H1 (cell line): ENCODE measurements at regions of chr2 and their contacts with region 1.

Region 1: DNA sequence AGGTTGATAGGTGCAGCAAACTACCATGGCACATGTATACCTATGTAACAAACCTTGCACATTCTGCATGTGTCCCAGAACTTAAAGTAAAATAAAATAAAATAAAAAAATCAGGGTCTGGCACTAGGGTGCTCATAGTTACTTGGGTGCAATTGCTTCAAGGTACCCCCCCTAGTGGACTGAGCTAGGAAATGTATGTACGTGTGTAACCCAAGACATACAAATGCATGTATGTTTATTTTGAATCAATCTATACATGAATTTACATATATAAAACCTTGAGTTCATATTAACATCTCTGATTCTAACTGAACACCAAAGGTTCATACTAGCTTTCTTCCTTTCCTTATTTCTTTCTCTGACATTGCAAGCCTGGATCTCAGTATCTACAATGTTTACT is 51.5 kb downstream of the USP37 start:
- DNase-seq: no peak
- H3K4me3 ChIP-seq: no peak overlapping the region
- H3K27ac ChIP-seq: no peak overlapping the region
- H3K4me1 ChIP-seq: no peaks in the 10 kb centered on the region
- H3K27me3 ChIP-seq: no peaks in the 10 kb centered on the region
- CTCF ChIP-seq: peak in 2 of 3 experiments; percentile 25 to 51; a peak in 2 of 4 replicates
- EP300 ChIP-seq: no peak
- POLR2A ChIP-seq: no peak
- RAD21 ChIP-seq: peak in 1 of 2 experiments; percentile 18; a peak in 1 of 4 replicates

Region 2: GRCh38 chr2:218501665-218502064 is 14.9 kb before region 1 on chr2:
- CTCF ChIA-PET with region 1: interaction called, 16 read pairs
- POLR2A ChIA-PET with region 1: interaction called, 6 read pairs
- DNase-seq: no peak
- H3K4me3 ChIP-seq: no peak overlapping the region
- H3K27ac ChIP-seq: no peak overlapping the region
- H3K4me1 ChIP-seq: no peaks in the 10 kb centered on the region
- H3K27me3 ChIP-seq: no peaks in the 10 kb centered on the region
- CTCF ChIP-seq: no peak
- EP300 ChIP-seq: no peak
- POLR2A ChIP-seq: no peak
- RAD21 ChIP-seq: no peak

Region 3: DNA sequence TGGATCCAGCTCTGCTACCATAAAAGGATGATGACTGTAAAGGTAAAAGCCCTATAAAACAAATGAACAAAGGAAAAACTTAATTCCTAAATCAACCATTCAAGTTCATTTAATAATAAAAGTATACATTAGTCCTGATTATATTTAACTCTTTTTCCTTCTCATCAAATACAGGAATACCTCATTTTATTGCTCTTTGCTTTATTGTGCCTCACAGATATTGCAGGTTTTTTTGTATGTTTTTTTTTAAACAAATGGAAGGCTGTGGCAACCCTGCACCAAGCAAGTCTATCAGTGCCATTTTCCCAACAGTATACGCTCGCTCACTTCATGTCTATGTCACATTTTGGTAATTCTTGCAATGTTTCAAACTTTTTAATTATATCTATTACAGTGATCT is 13.4 kb after region 1 on chr2:
- CTCF ChIA-PET with region 1: interaction called, 18 read pairs
- POLR2A ChIA-PET with region 1: interaction called, 4 read pairs
- DNase-seq: no peak
- H3K4me3 ChIP-seq: no peak overlapping the region
- H3K27ac ChIP-seq: no peak overlapping the region
- H3K4me1 ChIP-seq: no peaks in the 10 kb centered on the region
- H3K27me3 ChIP-seq: no peaks in the 10 kb centered on the region
- CTCF ChIP-seq: no peak
- EP300 ChIP-seq: no peak
- POLR2A ChIP-seq: no peak
- RAD21 ChIP-seq: no peak

Region 4: GRCh38 chr2:218618102-218618860 is 101.7 kb after region 1 on chr2:
- CTCF ChIA-PET with region 1: no interaction called
- POLR2A ChIA-PET with region 1: no interaction called
- DNase-seq: no peak
- H3K4me3 ChIP-seq: no peak overlapping the region
- H3K27ac ChIP-seq: no peak overlapping the region
- H3K4me1 ChIP-seq: no peaks in the 10 kb centered on the region; a peak in 1 of 7 replicates
- H3K27me3 ChIP-seq: no peaks in the 10 kb centered on the region
- CTCF ChIP-seq: peak; percentile 7 to 30 (median 9); a peak in 3 of 4 replicates
- EP300 ChIP-seq: no peak
- POLR2A ChIP-seq: no peak
- RAD21 ChIP-seq: peak; percentile 36 to 46